ENCODE measurements at regions of chr12 and their contacts with region 1.

Region 1: DNA sequence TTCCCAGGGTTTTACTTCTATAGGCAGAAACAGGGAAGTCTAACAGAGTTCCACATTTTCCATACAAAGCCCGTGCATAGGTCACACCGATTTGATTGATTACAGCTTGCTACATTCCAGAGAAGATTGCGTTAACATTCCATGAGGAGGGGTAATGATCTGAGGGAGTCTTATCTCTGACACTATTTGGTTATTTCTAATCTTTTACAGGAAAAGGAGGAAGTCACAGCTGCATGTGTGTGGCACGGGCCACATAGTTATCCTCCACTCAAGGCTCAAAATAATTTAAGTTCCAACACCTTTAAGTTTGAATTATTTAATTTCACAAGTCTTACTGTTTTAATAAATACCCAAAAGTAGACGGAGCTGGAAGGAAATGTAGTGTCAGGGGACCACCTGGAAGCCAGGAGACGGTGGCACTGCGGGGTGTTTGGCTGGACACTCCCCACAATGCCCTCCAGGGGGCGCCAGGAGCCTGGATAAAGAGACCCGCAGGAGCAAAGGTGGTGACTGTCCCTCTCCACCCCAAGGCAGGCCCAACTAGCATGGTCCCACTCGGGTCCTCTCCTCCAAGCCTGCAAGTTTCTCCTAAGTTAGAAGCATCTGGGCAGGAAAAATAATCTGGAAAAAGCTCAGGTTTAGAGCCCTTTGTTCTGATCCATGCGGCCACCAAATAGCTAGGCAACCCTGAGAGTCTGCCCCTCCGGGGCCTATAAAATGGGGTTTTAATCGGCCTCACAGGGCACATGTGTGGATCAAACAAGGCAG is 20.2 kb downstream of the KRT8 start:
- DNase-seq: peak; percentile 80
- H3K4me3 Mint-ChIP-seq: no peak overlapping the region
- H3K27ac Mint-ChIP-seq: no peak overlapping the region
- H3K4me1 Mint-ChIP-seq: peaks cover 6% of the 10 kb centered on the region
- H3K27me3 Mint-ChIP-seq: peaks cover 5% of the 10 kb centered on the region

Region 2: GRCh38 chr12:52895061-52895887 is 10.6 kb after region 1 on chr12:
- CTCF ChIA-PET with region 1: interaction called, 19 read pairs
- POLR2A ChIA-PET with region 1: no interaction called
- DNase-seq: no peak
- H3K4me3 Mint-ChIP-seq: no peak overlapping the region
- H3K27ac Mint-ChIP-seq: no peak overlapping the region
- H3K4me1 Mint-ChIP-seq: no peaks in the 10 kb centered on the region
- H3K27me3 Mint-ChIP-seq: peaks cover 4% of the 10 kb centered on the region

Region 3: DNA sequence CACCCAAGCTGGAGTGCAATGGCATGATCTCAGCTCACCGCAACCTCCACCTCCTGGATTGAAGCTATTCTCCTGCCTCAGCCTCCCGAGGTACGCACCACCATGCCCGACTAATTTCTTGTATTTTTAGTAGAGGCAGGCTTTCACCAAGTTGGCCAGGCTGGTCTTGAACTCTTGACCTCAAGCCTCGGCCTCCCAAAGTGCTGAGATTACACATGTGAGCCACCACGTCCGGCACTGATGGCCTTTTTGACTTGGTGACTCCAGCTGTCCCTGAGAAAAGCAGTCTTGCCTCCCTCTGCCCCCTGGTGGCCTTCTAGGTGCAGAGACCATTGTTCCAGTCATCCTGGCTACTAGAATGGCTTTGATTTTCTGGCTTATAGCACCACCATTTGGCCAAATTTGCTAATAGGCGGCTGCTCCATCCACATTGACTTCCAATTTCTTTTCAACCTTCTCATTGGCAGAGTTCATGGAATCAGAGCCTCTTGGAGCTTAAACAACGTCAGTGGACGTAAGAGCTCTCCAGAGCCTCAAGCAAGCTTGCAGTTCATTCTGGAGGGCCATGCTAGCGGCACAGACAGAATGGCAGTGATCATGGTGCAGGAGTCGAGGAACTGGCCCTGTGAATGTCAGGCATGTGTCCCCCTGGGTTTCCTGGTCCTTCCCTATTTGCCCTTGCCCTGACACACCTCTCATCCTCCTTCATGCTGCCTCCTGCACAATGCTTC is 96.1 kb after region 1 on chr12:
- CTCF ChIA-PET with region 1: interaction called, 51 read pairs
- POLR2A ChIA-PET with region 1: no interaction called
- DNase-seq: peak; percentile 89
- H3K4me3 Mint-ChIP-seq: no peak overlapping the region
- H3K27ac Mint-ChIP-seq: no peak overlapping the region
- H3K4me1 Mint-ChIP-seq: no peaks in the 10 kb centered on the region
- H3K27me3 Mint-ChIP-seq: peaks cover 21% of the 10 kb centered on the region

Region 4: GRCh38 chr12:52992699-52993557 is 108.2 kb after region 1 on chr12:
- CTCF ChIA-PET with region 1: interaction called, 12 read pairs
- POLR2A ChIA-PET with region 1: no interaction called
- DNase-seq: no peak
- H3K4me3 Mint-ChIP-seq: no peak overlapping the region
- H3K27ac Mint-ChIP-seq: no peak overlapping the region
- H3K4me1 Mint-ChIP-seq: no peaks in the 10 kb centered on the region
- H3K27me3 Mint-ChIP-seq: peaks cover 3% of the 10 kb centered on the region